HEK293 (cell line): ENCODE measurements at regions of chr5 and their contacts with region 1.

Region 1: GRCh38 chr5:79514391-79515105 is 614 bp upstream of the HOMER1 start:
- H3K4me3 ChIP-seq: peak overlapping the region; percentile 86
- H3K27ac ChIP-seq: peak overlapping the region; percentile 96
- H3K4me1 ChIP-seq: peaks cover 4% of the 10 kb centered on the region
- CTCF ChIP-seq: peak; percentile 74

Region 2: DNA sequence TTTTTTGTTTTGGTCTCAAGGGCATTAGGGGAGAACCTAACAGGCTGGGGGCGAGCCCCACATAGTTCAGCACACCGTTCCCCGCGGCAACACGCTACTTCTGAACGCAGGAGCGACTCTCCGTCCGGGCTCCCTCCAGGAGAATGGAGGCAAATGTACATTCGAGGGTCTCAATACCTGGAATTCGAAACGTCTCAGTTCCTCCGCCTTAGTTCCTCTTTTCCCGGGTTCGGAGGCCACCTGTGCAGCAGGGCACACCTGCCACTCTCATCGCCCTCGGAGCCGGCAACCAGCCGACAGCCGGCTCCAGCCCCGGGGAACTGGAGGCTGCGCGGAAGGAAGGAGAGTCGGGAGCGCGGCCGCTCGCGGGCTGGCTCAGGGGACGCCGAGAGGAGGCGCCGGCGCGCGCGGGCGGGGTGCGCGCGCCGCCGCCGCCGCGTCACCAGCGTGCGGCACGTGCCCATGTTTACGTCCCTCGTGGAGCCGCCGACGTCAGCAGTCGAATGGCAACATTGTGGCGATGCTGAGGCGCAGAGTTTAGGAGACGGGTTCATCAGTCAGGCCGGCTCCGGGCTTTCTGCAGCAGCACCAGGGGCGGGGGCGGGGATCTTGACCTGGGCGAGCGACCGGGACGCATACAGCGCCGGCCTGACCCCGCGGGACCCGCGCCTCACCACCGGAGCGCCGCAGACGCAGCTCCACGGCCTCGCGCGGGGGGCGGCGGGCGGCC is 278.7 kb before region 1 on chr5 and contains the start of gene JMY:
- CTCF ChIA-PET with region 1: no interaction called
- POLR2A ChIA-PET with region 1: interaction called, 19 read pairs
- H3K4me3 ChIP-seq: peak within 1 kb of the TSS; percentile 93
- H3K27ac ChIP-seq: peak within 1 kb of the TSS; percentile 88
- H3K4me1 ChIP-seq: peaks cover 3% of the 10 kb centered on the region; the same call in 1 of the 2 replicates
- CTCF ChIP-seq: no peak

Region 3: DNA sequence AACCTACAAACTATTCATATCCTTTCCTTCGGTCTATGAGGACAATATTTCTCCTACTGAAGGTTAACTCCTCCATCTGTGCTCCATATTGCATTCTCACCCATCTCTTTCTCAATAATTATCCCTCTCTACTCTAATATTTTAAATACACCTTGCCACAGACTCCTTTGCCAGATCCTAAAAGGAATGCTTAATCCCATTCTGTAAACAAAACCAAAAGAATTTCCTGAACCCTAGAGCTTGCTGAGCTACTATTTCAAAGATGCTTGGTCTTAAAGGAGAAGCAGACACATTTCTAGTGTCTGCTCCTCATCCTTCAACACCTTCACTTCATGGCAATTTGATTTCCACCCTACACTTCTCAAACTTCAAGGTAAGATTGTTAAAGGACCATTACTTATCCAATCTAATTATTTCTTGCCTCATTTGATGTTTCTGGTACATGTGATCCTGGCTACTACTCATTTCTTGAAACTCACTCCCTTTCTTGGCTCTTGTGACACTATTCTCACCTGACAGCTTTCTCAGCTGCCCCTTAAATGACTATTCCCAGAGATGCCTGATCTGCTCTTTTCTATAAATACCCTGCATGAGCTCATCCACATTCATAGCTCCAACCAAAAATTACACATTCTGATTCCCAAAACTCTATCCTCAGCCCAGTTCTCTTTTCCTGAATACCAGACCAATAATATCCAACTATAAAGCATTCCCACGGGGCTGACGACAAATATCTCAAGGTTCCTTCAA is 20.8 kb before region 1 on chr5:
- CTCF ChIA-PET with region 1: interaction called, 3 read pairs
- POLR2A ChIA-PET with region 1: interaction called, 18 read pairs
- H3K4me3 ChIP-seq: no peak overlapping the region
- H3K27ac ChIP-seq: no peak overlapping the region
- H3K4me1 ChIP-seq: peaks cover 15% of the 10 kb centered on the region
- CTCF ChIP-seq: no peak

Region 4: GRCh38 chr5:79499640-79500273 is 14.8 kb before region 1 on chr5:
- CTCF ChIA-PET with region 1: interaction called, 3 read pairs
- POLR2A ChIA-PET with region 1: interaction called, 18 read pairs
- H3K4me3 ChIP-seq: no peak overlapping the region
- H3K27ac ChIP-seq: no peak overlapping the region
- H3K4me1 ChIP-seq: peaks cover 18% of the 10 kb centered on the region
- CTCF ChIP-seq: no peak